Adrenal gland (tissue), 19 donors: ENCODE measurements at regions of chr1 and their contacts with region 1.

Region 1: GRCh38 chr1:28208818-28209441 is 23.9 kb downstream of the DNAJC8 start:
- DNase-seq: peak; percentile 35 to 78 (median 42)
- H3K4me3 ChIP-seq: no peak overlapping the region
- H3K27ac ChIP-seq: no peak overlapping the region
- H3K4me1 ChIP-seq: peaks cover 0 to 6% of the 10 kb centered on the region in 2 donors
- H3K27me3 ChIP-seq: no peaks in the 10 kb centered on the region
- CTCF ChIP-seq: peak; percentile 32 to 65 (median 54)
- POLR2A ChIP-seq: no peak

Region 2: DNA sequence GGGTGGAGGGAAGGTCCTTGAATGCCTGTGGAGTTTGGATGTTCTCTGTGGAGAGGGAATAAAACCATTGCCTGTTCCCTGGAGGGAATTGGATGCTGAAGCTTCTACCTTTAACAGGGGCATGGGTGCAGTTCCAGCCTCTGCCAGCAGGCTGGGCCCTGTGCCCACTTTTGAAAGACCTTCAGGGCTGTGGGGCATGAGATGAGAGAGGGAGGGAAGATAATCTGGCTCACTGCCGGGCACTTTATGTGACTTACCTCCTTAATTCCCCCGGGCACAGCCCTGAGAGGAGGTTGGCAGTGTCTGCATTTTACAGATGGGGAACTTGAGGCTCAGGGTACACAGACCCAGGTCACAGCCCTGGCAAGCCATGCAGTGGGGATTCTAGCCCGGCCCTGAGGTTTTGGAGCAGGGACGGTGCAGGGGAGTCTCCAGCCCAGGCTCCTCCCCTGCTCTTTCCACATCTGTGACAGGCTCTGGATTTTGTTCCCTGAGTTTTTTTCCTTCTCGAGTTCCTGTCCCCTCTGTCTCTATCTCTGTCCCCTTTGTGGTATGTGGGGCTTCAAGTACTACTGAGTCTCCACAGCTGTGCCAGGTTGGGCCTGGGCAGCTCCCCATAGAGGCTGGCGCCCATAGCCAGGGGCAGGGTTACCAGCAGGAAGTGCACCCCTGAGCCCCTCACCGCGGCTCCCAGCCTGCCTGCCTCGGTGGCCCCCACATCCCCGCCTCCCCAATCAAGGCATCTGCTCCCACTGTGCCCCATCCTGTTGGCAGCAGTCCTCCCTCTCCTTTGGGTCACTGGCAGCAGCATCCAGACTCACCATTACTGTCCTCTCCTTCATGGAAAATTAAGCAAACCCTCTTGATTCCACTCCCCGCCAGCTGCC is 350.6 kb before region 1 on chr1:
- intact Hi-C with region 1: loop called in 1 of 2 experiments (anchors 5 kb)
- DNase-seq: peak; percentile 82 to 97 (median 89)
- H3K4me3 ChIP-seq: no peak overlapping the region
- H3K27ac ChIP-seq: peak overlapping the region in 2 of 5 donors; percentile 40 to 57
- H3K4me1 ChIP-seq: peaks cover 7 to 10% of the 10 kb centered on the region in 2 donors
- H3K27me3 ChIP-seq: no peaks in the 10 kb centered on the region
- CTCF ChIP-seq: peak; percentile 94 to 98 (median 95)
- POLR2A ChIP-seq: no peak

Region 3: GRCh38 chr1:28091043-28091781 is 117.7 kb before region 1 on chr1:
- intact Hi-C with region 1: loop called in 1 of 2 experiments (anchors 5 kb)
- DNase-seq: peak; percentile 63 to 86 (median 73)
- H3K4me3 ChIP-seq: no peak overlapping the region
- H3K27ac ChIP-seq: no peak overlapping the region
- H3K4me1 ChIP-seq: peaks cover 8 to 15% of the 10 kb centered on the region in 2 donors
- H3K27me3 ChIP-seq: no peaks in the 10 kb centered on the region
- CTCF ChIP-seq: peak; percentile 64 to 80 (median 72)
- POLR2A ChIP-seq: no peak